ENCODE measurements at regions of chr1 and their contacts with region 1.

Region 1: GRCh38 chr1:209618756-209619420 is 33.3 kb downstream of the LAMB3 start:
- DNase-seq: no peak

Region 2: DNA sequence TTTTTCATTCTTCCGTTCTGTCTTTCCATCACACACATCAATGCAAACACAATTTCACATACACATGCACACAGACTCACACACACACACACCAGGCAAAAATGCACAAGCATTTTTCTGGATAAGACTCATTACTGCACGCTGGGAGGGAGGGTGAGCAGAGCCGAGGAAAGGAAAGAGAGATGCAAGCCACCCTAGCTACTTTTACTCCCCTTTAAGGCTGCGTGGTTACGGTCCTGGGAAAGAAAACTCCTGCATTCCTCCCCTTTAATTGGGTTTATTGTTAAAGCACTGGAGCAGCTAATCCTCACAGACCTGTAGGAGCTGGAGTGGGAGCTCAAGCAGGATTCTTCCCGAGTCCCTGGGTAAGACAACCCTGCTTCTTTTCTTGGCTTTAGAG is 35.5 kb before region 1 on chr1 and contains the start of gene CAMK1G:
- in situ Hi-C with region 1: loop called (anchors 5 kb)
- DNase-seq: peak; percentile 66
- total RNA-seq, gene CAMK1G: 1.5 and 2.3 TPM in 2 replicates

Region 3: GRCh38 chr1:209723756-209724693 is 105.1 kb after region 1 on chr1:
- in situ Hi-C with region 1: no loop called
- DNase-seq: no peak

Region 4: GRCh38 chr1:210195635-210196165 is 576.8 kb after region 1 on chr1:
- in situ Hi-C with region 1: no loop called
- DNase-seq: no peak

Measured in G401 (cell line).